ENCODE measurements at regions of chr17 and their contacts with region 1.

Region 1: GRCh38 chr17:17237026-17237799 is at the start of gene FLCN:
- DNase-seq: peak; percentile 96 to 98
- ATAC-seq: peak; percentile 98
- H3K4me3 ChIP-seq: peak within 1 kb of the TSS; percentile 83 to 86
- H3K27ac ChIP-seq: peak within 1 kb of the TSS in 1 of 2 donors; percentile 55
- H3K4me1 ChIP-seq: no peaks in the 10 kb centered on the region
- H3K27me3 ChIP-seq: no peaks in the 10 kb centered on the region
- total RNA-seq, gene FLCN: 53.4 to 81.8 TPM

Region 2: GRCh38 chr17:16537130-16537458 is 700.1 kb before region 1 on chr17:
- intact Hi-C with region 1: loop called in 1 of 2 experiments (anchors 10 kb)
- DNase-seq: no peak
- ATAC-seq: no peak
- H3K4me3 ChIP-seq: no peak overlapping the region
- H3K27ac ChIP-seq: no peak overlapping the region
- H3K4me1 ChIP-seq: no peaks in the 10 kb centered on the region
- H3K27me3 ChIP-seq: no peaks in the 10 kb centered on the region

Region 3: DNA sequence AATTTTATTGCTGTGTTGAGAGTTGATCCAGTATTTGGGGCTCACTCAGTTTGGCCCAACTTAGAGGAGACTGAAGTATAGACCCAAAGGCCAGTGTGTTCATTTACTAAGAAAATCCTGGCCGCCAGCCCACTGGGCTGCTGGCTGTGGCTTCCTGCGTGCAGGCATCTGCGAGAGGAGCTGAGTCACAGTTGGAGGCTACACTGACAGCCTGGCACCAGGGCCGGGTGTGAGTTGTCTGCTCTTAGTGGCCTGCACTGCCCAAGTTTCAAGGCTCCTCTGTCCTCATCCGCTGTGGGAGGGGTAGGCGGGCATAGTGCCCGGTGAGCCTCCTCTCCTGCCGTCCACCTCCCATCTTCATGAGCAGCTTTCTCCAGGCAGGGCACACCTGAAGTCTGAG is 85.3 kb before region 1 on chr17:
- intact Hi-C with region 1: loop called in 1 of 2 experiments (anchors 2 kb)
- DNase-seq: peak; percentile 96 to 97
- ATAC-seq: peak; percentile 92
- H3K4me3 ChIP-seq: no peak overlapping the region
- H3K27ac ChIP-seq: peak overlapping the region in 1 of 2 donors; percentile 41
- H3K4me1 ChIP-seq: peaks cover 0 to 5% of the 10 kb centered on the region in 2 donors
- H3K27me3 ChIP-seq: no peaks in the 10 kb centered on the region

Region 4: GRCh38 chr17:17216776-17217175 is 20.4 kb before region 1 on chr17:
- intact Hi-C with region 1: no loop called
- DNase-seq: no peak
- ATAC-seq: peak; percentile 6
- H3K4me3 ChIP-seq: no peak overlapping the region
- H3K27ac ChIP-seq: no peak overlapping the region
- H3K4me1 ChIP-seq: no peaks in the 10 kb centered on the region
- H3K27me3 ChIP-seq: no peaks in the 10 kb centered on the region

Region 5: GRCh38 chr17:17515934-17516930 is 279.0 kb after region 1 on chr17:
- intact Hi-C with region 1: no loop called
- DNase-seq: peak in 1 of 2 donors; percentile 25
- ATAC-seq: no peak
- H3K4me3 ChIP-seq: no peak overlapping the region
- H3K27ac ChIP-seq: no peak overlapping the region
- H3K4me1 ChIP-seq: no peaks in the 10 kb centered on the region
- H3K27me3 ChIP-seq: no peaks in the 10 kb centered on the region